Aorta (tissue), 5 donors: ENCODE measurements at regions of chr4 and their contacts with region 1.

Region 1: DNA sequence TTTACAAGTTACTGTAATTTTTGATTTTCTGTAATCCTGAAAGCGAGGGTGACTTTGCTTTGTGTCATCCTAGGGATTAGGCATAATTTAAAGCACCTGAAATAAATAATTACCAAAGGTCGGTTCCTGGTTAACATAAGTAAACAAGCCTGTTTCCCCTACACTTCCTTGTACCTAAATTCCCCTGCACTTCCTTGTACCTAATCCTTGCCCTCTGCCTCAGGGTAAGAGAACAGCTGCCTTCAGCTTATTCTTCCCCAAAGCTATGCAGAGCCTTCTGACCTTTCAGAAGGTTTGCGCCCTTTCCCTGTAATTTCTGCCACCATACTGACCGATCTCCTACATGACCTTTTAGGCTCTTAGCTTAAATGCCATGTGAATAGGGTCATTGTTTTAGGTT is 166.1 kb upstream of the PDE5A start:
- DNase-seq: no peak
- ATAC-seq: no peak
- H3K4me3 ChIP-seq: no peak overlapping the region
- H3K27ac ChIP-seq: no peak overlapping the region
- H3K4me1 ChIP-seq: no peaks in the 10 kb centered on the region
- H3K27me3 ChIP-seq: no peaks in the 10 kb centered on the region

Region 2: DNA sequence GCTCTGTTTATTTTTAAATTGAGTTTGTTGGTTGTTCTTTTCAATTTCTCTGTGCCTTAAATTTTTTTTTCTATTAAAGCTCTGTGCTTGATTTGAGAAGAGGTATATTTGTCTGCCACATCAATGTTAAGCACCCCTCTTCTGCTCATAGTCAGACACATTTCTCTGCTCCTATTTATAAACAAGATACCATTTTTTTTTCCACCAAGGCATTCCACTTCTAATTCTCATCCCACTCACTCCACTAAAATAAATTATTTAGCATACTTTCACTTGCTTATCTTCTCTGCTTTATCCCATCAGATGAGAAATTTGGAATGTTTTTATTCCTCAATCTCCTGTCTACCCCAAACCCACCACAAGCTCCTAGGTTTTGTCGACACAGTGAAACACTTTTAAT is 39.1 kb before region 1 on chr4:
- intact Hi-C with region 1: loop called in 1 of 2 experiments (anchors 5 kb)
- DNase-seq: no peak
- ATAC-seq: no peak
- H3K4me3 ChIP-seq: no peak overlapping the region
- H3K27ac ChIP-seq: no peak overlapping the region
- H3K4me1 ChIP-seq: no peaks in the 10 kb centered on the region
- H3K27me3 ChIP-seq: no peaks in the 10 kb centered on the region

Region 3: GRCh38 chr4:119833611-119834010 is 38.9 kb after region 1 on chr4:
- intact Hi-C with region 1: loop called in 1 of 2 experiments (anchors 5 kb)
- DNase-seq: no peak
- ATAC-seq: peak; percentile 85
- H3K4me3 ChIP-seq: no peak overlapping the region
- H3K27ac ChIP-seq: peak overlapping the region in 1 of 2 donors; percentile 93
- H3K4me1 ChIP-seq: peaks cover 3 to 5% of the 10 kb centered on the region in 2 donors
- H3K27me3 ChIP-seq: no peaks in the 10 kb centered on the region